Head of caudate nucleus (tissue), 42 donors: ENCODE measurements at regions of chr18 and their contacts with region 1.

Region 1: DNA sequence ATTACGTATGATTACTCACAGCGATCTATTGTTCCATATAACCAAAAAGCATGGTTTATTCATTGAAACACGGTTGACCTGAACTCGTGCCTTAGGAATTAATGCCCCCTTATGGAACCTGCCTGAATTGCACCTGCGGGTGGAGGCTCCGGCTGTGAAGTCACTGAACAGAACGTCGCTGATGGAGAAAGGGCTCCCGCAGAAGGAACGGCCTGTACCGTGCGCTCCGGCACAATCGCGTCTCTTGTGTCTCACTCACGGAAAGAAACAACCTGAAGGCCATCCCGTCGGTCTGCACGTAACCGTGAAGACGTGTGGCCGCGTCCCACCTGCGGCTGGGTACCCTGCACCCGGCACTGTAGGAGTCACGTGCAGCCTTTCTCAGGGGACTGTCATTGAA is 133.1 kb downstream of the NFATC1 start:
- DNase-seq: peak; percentile 37 to 90 (median 76)

Region 2: GRCh38 chr18:79300413-79300812 is 228.4 kb before region 1 on chr18:
- intact Hi-C with region 1: no loop called
- DNase-seq: peak in 26 of 42 donors; percentile 8 to 60 (median 36)

Region 3: GRCh38 chr18:79380816-79381806 is 147.7 kb before region 1 on chr18:
- intact Hi-C with region 1: loop called (anchors 5 kb)
- DNase-seq: peak in 41 of 42 donors; percentile 61 to 92 (median 79)

Region 4: DNA sequence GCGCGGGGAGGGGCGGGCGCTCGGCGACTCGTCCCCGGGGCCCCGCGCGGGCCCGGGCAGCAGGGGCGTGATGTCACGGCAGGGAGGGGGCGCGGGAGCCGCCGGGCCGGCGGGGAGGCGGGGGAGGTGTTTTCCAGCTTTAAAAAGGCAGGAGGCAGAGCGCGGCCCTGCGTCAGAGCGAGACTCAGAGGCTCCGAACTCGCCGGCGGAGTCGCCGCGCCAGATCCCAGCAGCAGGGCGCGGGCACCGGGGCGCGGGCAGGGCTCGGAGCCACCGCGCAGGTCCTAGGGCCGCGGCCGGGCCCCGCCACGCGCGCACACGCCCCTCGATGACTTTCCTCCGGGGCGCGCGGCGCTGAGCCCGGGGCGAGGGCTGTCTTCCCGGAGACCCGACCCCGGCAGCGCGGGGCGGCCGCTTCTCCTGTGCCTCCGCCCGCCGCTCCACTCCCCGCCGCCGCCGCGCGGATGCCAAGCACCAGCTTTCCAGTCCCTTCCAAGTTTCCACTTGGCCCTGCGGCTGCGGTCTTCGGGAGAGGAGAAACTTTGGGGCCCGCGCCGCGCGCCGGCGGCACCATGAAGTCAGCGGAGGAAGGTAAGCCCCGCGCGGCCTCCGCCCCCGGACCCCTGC is 133.0 kb before region 1 on chr18 and contains the start of gene NFATC1:
- intact Hi-C with region 1: loop called (anchors 5 kb)
- DNase-seq: peak in 36 of 42 donors; percentile 35 to 78 (median 60)

Region 5: GRCh38 chr18:79422022-79422782 is 106.6 kb before region 1 on chr18:
- intact Hi-C with region 1: no loop called
- DNase-seq: no peak

Region 6: GRCh38 chr18:79634593-79635426 is 106.0 kb after region 1 on chr18:
- intact Hi-C with region 1: loop called (anchors 5 kb)
- DNase-seq: peak in 1 of 42 donors; percentile 12